ENCODE measurements at regions of chr20 and their contacts with region 1.

Region 1: GRCh38 chr20:844473-845225 is 11.1 kb downstream of the FAM110A start:
- DNase-seq: peak; percentile 75
- ATAC-seq: peak; percentile 82
- H3K4me3 Mint-ChIP-seq: peak overlapping the region; percentile 94
- H3K27ac Mint-ChIP-seq: peak overlapping the region; percentile 78
- H3K4me1 Mint-ChIP-seq: peaks cover 36% of the 10 kb centered on the region
- H3K27me3 Mint-ChIP-seq: no peaks in the 10 kb centered on the region

Region 2: DNA sequence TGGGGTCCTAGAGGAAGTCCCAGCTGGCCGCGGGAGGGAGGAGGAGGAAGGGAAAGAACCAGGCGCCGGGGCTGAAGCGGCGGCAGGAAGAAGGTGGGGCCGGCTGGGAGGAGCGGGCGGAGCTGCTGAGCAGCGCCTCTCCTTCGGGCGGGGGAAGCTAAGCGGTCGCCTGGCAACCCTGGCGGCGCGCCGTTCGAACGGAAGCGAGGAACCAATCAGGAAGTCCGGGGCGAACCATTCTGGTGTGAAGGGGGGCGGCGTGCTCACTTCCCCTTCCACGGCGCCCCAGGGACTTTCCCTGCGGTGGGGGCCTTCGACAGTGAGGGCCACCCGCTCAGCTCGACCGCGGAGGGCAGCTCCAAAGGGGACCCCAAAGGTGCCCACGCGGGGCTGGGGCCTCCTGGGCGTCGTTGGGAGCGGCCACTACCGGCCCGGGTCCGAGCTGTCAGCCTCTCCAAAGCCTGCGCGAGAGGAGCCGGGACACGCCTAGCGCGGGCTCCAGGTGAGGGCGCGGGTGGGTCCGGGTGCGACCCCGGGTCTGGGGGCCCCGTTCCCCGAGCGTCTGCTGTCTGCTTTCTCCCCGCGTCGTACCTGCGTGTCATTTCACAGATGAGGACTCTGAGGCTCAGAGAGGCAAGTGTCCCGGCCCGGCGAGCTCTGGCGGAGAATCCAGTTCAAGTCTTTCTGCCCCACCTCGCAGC is 11.0 kb before region 1 on chr20 and contains the start of gene FAM110A:
- POLR2A ChIA-PET with region 1: interaction called, 98 read pairs
- DNase-seq: peak; percentile 94
- ATAC-seq: peak; percentile 94
- H3K4me3 Mint-ChIP-seq: peak within 1 kb of the TSS; percentile 84
- H3K27ac Mint-ChIP-seq: peak within 1 kb of the TSS; percentile 77
- H3K4me1 Mint-ChIP-seq: peaks cover 30% of the 10 kb centered on the region
- H3K27me3 Mint-ChIP-seq: no peaks in the 10 kb centered on the region
- total RNA-seq, gene FAM110A: 44.5 to 50.6 TPM

Region 3: DNA sequence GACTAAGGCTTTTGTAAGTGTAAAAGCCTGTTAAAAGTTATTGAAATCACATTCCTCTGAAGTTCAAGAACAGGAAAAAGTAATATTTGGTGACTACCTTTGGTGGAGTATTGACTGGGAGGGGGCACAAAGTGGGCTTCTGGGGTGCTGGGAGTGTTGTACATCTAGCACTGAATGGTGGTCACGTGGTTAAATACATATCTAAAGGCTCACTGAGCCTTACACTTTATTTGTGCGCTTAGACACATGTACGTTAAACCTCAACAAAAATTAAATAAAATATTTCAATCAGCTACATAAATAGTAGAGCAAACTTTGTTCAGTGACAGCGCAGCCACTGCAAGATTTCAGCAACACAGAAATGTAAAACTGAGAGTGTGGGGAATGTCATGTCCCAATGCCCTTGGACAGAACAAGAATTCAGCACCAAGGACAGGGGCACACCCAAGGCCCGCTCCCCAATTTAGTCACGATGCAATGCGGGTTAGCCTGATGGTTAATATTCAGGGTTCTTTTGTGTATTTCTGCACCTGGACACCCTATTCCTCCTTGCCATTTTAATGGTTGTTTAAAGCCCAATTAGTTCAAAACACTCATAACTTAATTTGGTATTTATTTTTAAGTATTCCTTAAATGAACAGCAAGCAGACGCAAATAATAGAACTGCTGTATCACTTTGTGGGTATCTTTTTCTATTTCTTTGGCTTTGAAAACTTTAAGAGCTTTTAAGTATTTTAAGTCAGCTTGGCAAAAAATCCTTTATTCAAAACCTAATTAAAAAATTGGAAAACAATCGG is 34.1 kb after region 1 on chr20:
- POLR2A ChIA-PET with region 1: no interaction called
- DNase-seq: no peak
- ATAC-seq: no peak
- H3K4me3 Mint-ChIP-seq: no peak overlapping the region
- H3K27ac Mint-ChIP-seq: no peak overlapping the region
- H3K4me1 Mint-ChIP-seq: peaks cover 15% of the 10 kb centered on the region
- H3K27me3 Mint-ChIP-seq: no peaks in the 10 kb centered on the region

Region 4: DNA sequence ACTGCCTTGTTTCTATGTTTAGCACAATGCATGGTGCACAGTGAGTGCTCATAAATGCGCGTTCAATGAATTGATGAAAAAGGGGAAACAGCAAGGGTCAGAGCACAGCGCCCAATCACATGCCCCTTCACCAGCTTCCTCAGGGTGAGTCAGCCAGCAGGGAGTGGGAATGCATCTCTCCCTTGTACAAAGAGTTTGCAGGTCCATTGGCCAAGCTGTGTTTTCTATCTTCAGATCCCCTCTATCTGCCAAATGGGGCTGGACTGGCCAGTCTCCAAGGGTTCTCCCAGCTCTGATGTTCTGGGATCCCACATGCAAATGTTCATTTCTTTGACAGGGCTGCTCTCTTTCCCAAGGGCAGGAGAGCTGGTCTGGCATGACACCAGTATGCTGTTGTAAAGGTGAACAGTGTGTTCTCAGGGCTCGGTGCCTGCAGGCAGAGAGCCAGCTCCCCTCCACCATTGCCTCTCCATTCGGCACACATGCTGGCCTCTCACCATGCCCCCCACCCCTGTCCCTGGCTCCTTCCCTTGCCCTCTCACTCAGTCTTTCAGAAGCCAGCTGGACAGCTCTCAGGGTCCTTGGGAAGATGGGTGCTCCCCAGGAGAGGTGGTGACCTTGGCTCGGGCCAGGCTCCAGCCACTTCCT is 46.5 kb after region 1 on chr20:
- POLR2A ChIA-PET with region 1: no interaction called
- DNase-seq: no peak
- ATAC-seq: no peak
- H3K4me3 Mint-ChIP-seq: no peak overlapping the region
- H3K27ac Mint-ChIP-seq: no peak overlapping the region
- H3K4me1 Mint-ChIP-seq: no peaks in the 10 kb centered on the region
- H3K27me3 Mint-ChIP-seq: peaks cover 10% of the 10 kb centered on the region